CD4-positive, alpha-beta memory T cell (primary cell): ENCODE measurements at regions of chr6 and their contacts with region 1.

Region 1: DNA sequence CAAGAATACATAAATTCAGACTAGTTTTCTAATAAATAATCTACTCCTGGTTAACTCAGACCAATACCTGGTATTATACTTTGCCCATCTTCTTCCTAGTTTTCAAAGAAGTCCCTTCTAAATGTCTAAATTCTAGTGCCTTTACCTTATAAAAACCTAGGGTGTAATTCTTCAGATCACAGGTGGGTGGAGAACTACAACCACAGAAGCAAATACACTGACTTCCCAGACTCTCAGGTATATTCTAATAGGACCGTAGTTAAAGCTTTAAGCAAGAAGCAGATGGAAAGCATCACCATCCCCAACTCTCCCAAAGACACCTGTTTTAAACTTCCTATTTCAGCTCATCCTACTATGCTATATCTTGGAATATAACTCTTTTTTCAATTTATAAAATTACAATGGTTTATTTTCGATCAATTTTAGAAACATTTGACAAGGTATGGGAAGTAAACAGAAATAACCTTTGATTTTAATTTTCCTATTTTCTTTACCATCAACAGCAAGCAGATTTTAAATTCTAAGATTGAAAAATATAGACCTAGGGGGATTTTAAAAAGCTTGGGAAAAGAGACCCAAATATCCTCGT is 15.8 kb downstream of the MAN1A1 start:
- DNase-seq: peak in 4 of 5 donors; percentile 29 to 44 (median 37)
- H3K4me3 ChIP-seq: no peak overlapping the region
- H3K4me3 Mint-ChIP-seq: no peak overlapping the region
- H3K27ac ChIP-seq: no peak overlapping the region
- H3K27ac Mint-ChIP-seq: no peak overlapping the region
- H3K4me1 ChIP-seq: peaks cover 5% of the 10 kb centered on the region
- H3K4me1 Mint-ChIP-seq: peaks cover 6 to 31% (median 26%) of the 10 kb centered on the region in 4 donors
- H3K27me3 ChIP-seq: no peaks in the 10 kb centered on the region
- H3K27me3 Mint-ChIP-seq: no peaks in the 10 kb centered on the region

Region 2: GRCh38 chr6:119284861-119285521 is 48.8 kb before region 1 on chr6:
- CTCF ChIA-PET with region 1: no interaction called
- POLR2A ChIA-PET with region 1: no interaction called
- intact Hi-C with region 1: no loop called
- DNase-seq: peak in 3 of 5 donors; percentile 4 to 18 (median 6)
- H3K4me3 ChIP-seq: no peak overlapping the region
- H3K4me3 Mint-ChIP-seq: no peak overlapping the region
- H3K27ac ChIP-seq: no peak overlapping the region
- H3K27ac Mint-ChIP-seq: peak overlapping the region in 1 of 7 donors; percentile 24
- H3K4me1 ChIP-seq: peaks cover 4% of the 10 kb centered on the region
- H3K4me1 Mint-ChIP-seq: peaks cover 0 to 10% (median 3%) of the 10 kb centered on the region in 4 donors
- H3K27me3 ChIP-seq: no peaks in the 10 kb centered on the region
- H3K27me3 Mint-ChIP-seq: no peaks in the 10 kb centered on the region

Region 3: DNA sequence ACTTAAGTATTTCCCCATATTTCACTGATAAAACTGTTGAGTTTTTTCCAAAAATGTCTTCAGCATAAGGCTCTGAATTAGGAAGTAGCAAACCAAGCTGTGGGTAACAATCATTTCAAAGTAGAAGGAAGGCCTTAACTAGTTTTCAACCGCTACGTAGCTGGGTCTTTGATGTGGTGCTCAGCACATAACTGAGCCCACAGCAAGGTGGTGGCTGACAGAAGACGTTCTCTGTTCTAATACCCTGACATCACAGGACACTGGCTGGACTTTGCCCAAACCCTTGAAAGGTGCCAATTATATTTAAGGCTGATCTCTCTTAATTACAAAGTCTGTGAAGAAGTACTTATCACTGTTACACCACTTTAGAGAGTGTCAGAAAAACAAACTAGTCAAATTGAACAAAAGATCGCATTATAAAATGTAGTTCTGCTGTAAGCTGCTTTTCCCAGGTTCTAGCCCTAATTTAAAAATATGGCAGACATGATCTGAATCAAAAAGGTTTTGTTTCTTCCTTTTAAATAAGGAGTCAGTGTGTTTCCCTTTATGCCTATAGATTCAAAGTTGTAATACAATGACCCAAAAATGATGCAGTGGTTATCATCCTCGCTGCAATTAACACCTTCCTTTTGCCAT is 11.0 kb before region 1 on chr6:
- CTCF ChIA-PET with region 1: interaction called, 13 read pairs
- POLR2A ChIA-PET with region 1: interaction called, 3 read pairs
- intact Hi-C with region 1: no loop called
- DNase-seq: peak; percentile 55 to 68 (median 63)
- H3K4me3 ChIP-seq: no peak overlapping the region
- H3K4me3 Mint-ChIP-seq: peak overlapping the region in 6 of 8 donors; percentile 17 to 68 (median 40)
- H3K27ac ChIP-seq: no peak overlapping the region
- H3K27ac Mint-ChIP-seq: peak overlapping the region in 6 of 7 donors; percentile 19 to 92 (median 70)
- H3K4me1 ChIP-seq: peaks cover 20% of the 10 kb centered on the region
- H3K4me1 Mint-ChIP-seq: peaks cover 18 to 24% (median 20%) of the 10 kb centered on the region in 4 donors
- H3K27me3 ChIP-seq: no peaks in the 10 kb centered on the region
- H3K27me3 Mint-ChIP-seq: no peaks in the 10 kb centered on the region

Region 4: DNA sequence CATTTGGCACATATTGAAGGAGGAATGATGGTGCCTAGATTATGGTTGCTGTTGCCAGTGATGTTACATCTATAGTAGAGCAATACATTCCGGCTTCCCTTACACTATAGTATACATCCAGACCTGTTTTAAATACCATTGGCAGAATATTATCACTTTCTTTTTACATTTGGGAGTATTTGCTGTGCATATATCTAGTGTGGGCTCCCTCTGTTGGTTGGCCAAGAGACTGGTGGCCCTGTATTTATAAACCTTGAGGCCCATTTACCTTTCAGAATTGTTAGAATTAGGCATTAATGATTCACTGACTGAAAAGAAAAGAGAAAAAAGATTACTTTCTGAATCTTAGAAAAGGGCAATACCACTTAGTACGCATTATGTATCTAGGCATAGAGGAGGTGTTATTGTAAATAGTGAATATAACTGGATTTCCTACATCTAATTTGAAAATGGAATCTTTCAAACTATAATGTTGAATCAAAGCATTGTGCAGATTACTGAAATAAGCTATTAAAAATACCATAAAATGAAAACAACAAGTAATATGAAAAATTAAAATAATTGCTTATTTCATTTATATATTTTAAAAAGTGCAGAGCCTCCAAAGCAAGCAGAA is 644.6 kb after region 1 on chr6:
- CTCF ChIA-PET with region 1: interaction called, 6 read pairs
- POLR2A ChIA-PET with region 1: no interaction called
- intact Hi-C with region 1: loop called (anchors 5 kb)
- DNase-seq: peak in 1 of 5 donors; percentile 2
- H3K4me3 ChIP-seq: no peak overlapping the region
- H3K4me3 Mint-ChIP-seq: no peak overlapping the region
- H3K27ac ChIP-seq: no peak overlapping the region
- H3K27ac Mint-ChIP-seq: no peak overlapping the region
- H3K4me1 ChIP-seq: no peaks in the 10 kb centered on the region
- H3K4me1 Mint-ChIP-seq: peaks cover 0 to 3% (median 0%) of the 10 kb centered on the region in 4 donors
- H3K27me3 ChIP-seq: no peaks in the 10 kb centered on the region
- H3K27me3 Mint-ChIP-seq: no peaks in the 10 kb centered on the region

Region 5: GRCh38 chr6:120826253-120826652 is 1492.5 kb after region 1 on chr6:
- CTCF ChIA-PET with region 1: no interaction called
- POLR2A ChIA-PET with region 1: no interaction called
- intact Hi-C with region 1: loop called (anchors 5 kb)
- DNase-seq: no peak
- H3K4me3 ChIP-seq: no peak overlapping the region
- H3K4me3 Mint-ChIP-seq: no peak overlapping the region
- H3K27ac ChIP-seq: no peak overlapping the region
- H3K27ac Mint-ChIP-seq: no peak overlapping the region
- H3K4me1 ChIP-seq: no peaks in the 10 kb centered on the region
- H3K4me1 Mint-ChIP-seq: no peaks in the 10 kb centered on the region
- H3K27me3 ChIP-seq: no peaks in the 10 kb centered on the region
- H3K27me3 Mint-ChIP-seq: peaks cover 0 to 2% of the 10 kb centered on the region in 2 donors